PC-3 (cell line): ENCODE measurements at regions of chr6 and their contacts with region 1.

Region 1: DNA sequence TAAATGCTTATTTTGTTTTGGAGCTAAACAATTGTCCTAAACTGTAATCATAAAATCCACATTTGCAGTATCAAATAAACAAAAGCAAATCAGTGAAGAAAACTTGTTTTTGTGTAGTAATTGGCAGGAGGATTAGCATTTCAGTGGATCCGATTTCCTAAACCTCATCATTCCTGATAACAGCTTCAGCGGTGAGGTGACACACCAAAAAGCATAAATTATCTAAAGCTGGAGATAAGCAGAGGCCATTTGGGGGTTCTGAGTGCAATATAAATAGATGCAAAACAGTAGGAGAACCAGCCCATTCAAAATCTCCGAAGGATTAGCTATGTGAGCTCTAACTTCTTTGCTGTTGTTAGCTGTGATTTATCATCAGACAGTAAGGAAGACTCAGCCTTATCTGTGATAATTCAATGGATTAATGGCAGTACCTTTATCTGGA is 235.8 kb downstream of the EPHA7 start:
- DNase-seq: no peak
- ATAC-seq: no peak
- H3K4me3 ChIP-seq: no peak overlapping the region
- H3K27ac ChIP-seq: peak overlapping the region; percentile 20; the same call in 1 of the 2 replicates
- H3K4me1 ChIP-seq: no peaks in the 10 kb centered on the region
- H3K27me3 ChIP-seq: no peaks in the 10 kb centered on the region
- CTCF ChIP-seq: no peak

Region 2: GRCh38 chr6:93047033-93047432 is 136.5 kb before region 1 on chr6:
- CTCF ChIA-PET with region 1: no interaction called
- POLR2A ChIA-PET with region 1: no interaction called
- intact Hi-C with region 1: loop called (anchors 5 kb)
- DNase-seq: no peak
- ATAC-seq: no peak
- H3K4me3 ChIP-seq: no peak overlapping the region
- H3K27ac ChIP-seq: no peak overlapping the region
- H3K4me1 ChIP-seq: no peaks in the 10 kb centered on the region
- H3K27me3 ChIP-seq: no peaks in the 10 kb centered on the region
- CTCF ChIP-seq: no peak

Region 3: GRCh38 chr6:93139408-93140081 is 44.0 kb before region 1 on chr6:
- CTCF ChIA-PET with region 1: no interaction called
- POLR2A ChIA-PET with region 1: no interaction called
- intact Hi-C with region 1: no loop called
- DNase-seq: no peak
- ATAC-seq: no peak
- H3K4me3 ChIP-seq: no peak overlapping the region
- H3K27ac ChIP-seq: no peak overlapping the region
- H3K4me1 ChIP-seq: no peaks in the 10 kb centered on the region
- H3K27me3 ChIP-seq: no peaks in the 10 kb centered on the region
- CTCF ChIP-seq: no peak

Region 4: DNA sequence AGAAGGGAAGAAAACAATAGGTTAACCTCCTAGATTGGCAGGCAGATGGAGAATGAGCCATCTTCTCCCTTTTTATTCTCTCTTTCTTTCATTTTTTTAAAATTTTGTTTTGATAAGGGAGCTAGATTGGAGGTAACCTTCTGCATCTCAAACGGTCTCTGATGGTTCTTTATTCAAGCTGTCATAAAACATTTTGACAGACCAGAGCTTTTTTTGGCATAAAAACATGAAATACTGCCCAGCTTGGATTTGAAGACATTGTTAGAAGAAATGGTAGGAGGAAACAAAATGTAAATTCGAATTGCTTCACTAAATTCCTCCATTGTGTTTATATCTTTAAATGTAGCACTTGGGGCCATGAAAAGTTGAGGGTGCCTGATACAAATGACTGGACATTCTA is 77.3 kb after region 1 on chr6:
- CTCF ChIA-PET with region 1: no interaction called
- POLR2A ChIA-PET with region 1: no interaction called
- intact Hi-C with region 1: loop called (anchors 5 kb)
- DNase-seq: no peak
- ATAC-seq: no peak
- H3K4me3 ChIP-seq: no peak overlapping the region
- H3K27ac ChIP-seq: no peak overlapping the region
- H3K4me1 ChIP-seq: peaks cover 5% of the 10 kb centered on the region; the same call in 1 of the 2 replicates
- H3K27me3 ChIP-seq: no peaks in the 10 kb centered on the region
- CTCF ChIP-seq: no peak